ENCODE measurements at regions of chr10 and their contacts with region 1.

Region 1: GRCh38 chr10:3873728-3874461 is 88.9 kb upstream of the KLF6 start:
- DNase-seq: peak; percentile 81
- H3K4me3 Mint-ChIP-seq: peak overlapping the region; percentile 14
- H3K27ac Mint-ChIP-seq: peak overlapping the region; percentile 88
- H3K4me1 Mint-ChIP-seq: peaks cover 52% of the 10 kb centered on the region
- H3K27me3 Mint-ChIP-seq: no peaks in the 10 kb centered on the region

Region 2: GRCh38 chr10:3887885-3888476 is 14.1 kb after region 1 on chr10:
- intact Hi-C with region 1: loop called (anchors 2 kb)
- DNase-seq: peak; percentile 83
- H3K4me3 Mint-ChIP-seq: peak overlapping the region; percentile 67
- H3K27ac Mint-ChIP-seq: peak overlapping the region; percentile 94
- H3K4me1 Mint-ChIP-seq: peaks cover 38% of the 10 kb centered on the region
- H3K27me3 Mint-ChIP-seq: no peaks in the 10 kb centered on the region

Region 3: DNA sequence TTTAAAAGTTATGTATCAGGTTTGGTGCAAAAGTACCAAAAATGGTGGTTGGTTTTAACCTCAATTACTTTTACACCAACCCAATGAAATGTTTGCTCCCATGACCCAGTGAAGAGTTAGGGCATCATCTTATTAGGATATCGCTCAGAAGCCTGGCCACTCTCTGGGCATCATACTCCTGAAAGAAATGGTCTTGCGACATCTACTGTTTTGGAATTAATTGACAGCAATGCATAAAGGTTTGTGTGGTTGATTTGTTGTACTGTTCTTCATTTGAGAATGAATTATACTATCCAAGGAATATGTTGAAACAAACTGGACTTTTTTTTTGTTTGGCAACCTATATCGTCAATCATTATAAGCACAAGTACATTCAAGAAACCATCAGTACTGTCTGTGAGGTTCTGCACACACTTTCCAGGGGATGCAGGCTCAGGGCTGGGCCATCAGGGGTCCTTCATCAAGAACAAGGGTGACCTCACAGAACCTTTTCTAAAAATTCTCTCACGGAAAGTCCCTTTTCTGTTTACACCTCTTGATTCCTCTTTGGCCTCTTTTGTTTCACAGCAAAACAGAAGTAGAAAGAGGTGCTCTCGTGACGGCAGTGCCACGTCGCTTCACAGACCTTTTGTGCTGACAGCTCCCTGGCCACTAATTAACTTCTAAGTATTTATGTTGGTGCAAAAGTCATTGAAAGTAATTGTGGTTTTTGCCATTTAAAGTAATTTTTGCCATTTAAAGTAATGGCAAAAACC is 28.3 kb after region 1 on chr10:
- intact Hi-C with region 1: loop called (anchors 2 kb)
- DNase-seq: peak; percentile 79
- H3K4me3 Mint-ChIP-seq: peak overlapping the region; percentile 20
- H3K27ac Mint-ChIP-seq: peak overlapping the region; percentile 87
- H3K4me1 Mint-ChIP-seq: peaks cover 29% of the 10 kb centered on the region
- H3K27me3 Mint-ChIP-seq: no peaks in the 10 kb centered on the region

Region 4: GRCh38 chr10:4067531-4067930 is 193.6 kb after region 1 on chr10:
- intact Hi-C with region 1: loop called (anchors 5 kb)
- DNase-seq: peak; percentile 69
- H3K4me3 Mint-ChIP-seq: no peak overlapping the region
- H3K27ac Mint-ChIP-seq: no peak overlapping the region
- H3K4me1 Mint-ChIP-seq: peaks cover 15% of the 10 kb centered on the region
- H3K27me3 Mint-ChIP-seq: no peaks in the 10 kb centered on the region

Measured in activated CD4-positive, alpha-beta T cell treated with anti-CD3 and anti-CD28 coated beads, Interleukin-2, amount 10 ng/mL, durations not matched to agents 24 days and 14 days (primary cell).